ENCODE measurements at regions of chr1 and their contacts with region 1.

Region 1: DNA sequence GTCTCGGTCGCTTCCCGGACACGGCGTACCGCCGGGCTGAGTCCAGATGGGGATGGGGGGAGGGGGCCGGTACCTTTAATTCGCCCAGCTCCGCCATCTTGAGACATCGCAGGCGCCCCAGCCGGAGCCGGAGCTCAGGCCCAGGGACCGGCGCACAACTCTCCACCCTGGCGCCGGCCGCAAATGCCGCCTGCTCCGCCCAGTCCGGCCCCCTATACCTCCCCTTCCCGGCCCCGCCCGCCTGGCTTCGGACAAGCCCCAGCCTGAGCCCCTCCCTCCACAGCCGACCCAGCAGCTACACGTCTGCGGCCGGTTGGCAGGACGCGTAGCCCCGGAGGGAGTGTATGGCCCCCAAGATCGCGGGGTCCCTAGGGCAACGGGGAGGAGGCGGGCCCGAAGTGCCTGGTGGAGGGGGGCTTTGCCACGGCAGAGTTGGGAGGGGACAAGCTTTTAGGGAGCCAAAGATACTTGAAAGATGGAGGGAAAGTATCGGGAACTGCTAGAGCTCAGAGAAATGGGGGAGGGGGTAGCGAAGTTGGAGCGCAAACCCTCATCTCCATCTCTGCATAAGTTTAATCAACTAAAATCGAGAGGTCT is at the start of gene PIAS3:
- DNase-seq: peak; percentile 91
- ATAC-seq: peak; percentile 86
- H3K4me3 Mint-ChIP-seq: peak within 1 kb of the TSS; percentile 96
- H3K27ac Mint-ChIP-seq: peak within 1 kb of the TSS; percentile 92
- H3K4me1 Mint-ChIP-seq: peaks cover 14% of the 10 kb centered on the region
- H3K27me3 Mint-ChIP-seq: peaks cover 2% of the 10 kb centered on the region
- CTCF ChIP-seq: no peak
- total RNA-seq, gene PIAS3: 29.0 and 30.9 TPM in 2 replicates

Region 2: GRCh38 chr1:145690624-145691035 is 168.4 kb before region 1 on chr1:
- CTCF ChIA-PET with region 1: no interaction called
- POLR2A ChIA-PET with region 1: no interaction called
- intact Hi-C with region 1: no loop called
- DNase-seq: no peak
- ATAC-seq: no peak
- H3K4me3 Mint-ChIP-seq: no peak overlapping the region
- H3K27ac Mint-ChIP-seq: no peak overlapping the region
- H3K4me1 Mint-ChIP-seq: peaks cover 14% of the 10 kb centered on the region
- H3K27me3 Mint-ChIP-seq: no peaks in the 10 kb centered on the region
- CTCF ChIP-seq: no peak

Region 3: DNA sequence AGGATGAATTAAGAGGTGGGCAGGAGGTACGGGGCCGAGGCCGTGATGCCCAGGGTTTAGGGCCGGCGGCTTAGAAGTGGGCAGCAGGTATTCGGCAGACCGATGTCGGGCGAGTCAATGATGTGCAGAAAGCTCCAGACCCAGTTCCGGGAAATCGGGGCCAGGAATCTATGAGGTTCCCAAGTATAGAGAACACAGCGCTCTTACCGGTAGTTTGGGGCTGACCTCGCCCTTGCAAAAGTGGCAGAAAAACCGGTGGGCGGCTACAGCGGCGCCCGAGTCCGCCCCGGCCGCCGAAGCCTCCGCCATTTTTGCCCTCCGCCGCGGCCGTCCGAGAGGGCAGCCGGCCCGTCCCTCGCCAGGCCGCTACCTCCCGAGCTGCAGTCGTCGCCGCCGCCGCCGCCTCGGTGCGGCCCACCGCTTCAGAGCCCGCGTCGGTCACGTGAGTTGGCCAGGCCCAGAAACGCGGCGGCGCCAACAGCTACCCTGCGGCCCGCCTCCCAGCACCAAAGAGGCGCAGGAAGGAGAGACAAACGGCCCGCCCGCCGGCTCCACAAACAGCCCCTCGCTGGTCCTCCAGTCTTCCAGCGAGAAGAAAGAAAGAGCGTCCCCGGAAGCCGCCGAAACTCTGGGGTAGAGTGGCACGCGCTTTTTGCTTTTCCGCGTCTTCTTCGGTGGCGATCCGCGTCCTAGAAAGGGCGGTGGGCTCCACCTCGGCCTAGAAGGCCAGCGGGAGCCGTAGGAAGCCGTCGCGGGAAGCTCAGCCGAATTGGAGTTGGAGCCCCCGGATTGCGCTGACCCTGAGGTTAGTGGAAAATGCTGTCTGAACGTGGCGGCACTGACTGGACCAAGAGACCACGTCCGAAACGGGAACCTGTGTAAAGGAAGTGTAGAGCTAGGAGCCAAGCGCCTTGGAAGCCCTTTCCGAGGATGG is 35.2 kb before region 1 on chr1 and contains the starts of genes POLR3C and RNF115:
- CTCF ChIA-PET with region 1: no interaction called
- POLR2A ChIA-PET with region 1: interaction called, 48 read pairs
- intact Hi-C with region 1: loop called (anchors 1 kb)
- DNase-seq: peak; percentile 80
- ATAC-seq: peak; percentile 95
- H3K4me3 Mint-ChIP-seq: peak within 1 kb of the TSS; percentile 97
- H3K27ac Mint-ChIP-seq: peak within 1 kb of the TSS; percentile 94
- H3K4me1 Mint-ChIP-seq: peaks cover 25% of the 10 kb centered on the region
- H3K27me3 Mint-ChIP-seq: no peaks in the 10 kb centered on the region
- CTCF ChIP-seq: no peak
- total RNA-seq, gene POLR3C: 43.7 and 51.2 TPM in 2 replicates
- total RNA-seq, gene RNF115: 15.3 and 19.7 TPM in 2 replicates

Region 4: DNA sequence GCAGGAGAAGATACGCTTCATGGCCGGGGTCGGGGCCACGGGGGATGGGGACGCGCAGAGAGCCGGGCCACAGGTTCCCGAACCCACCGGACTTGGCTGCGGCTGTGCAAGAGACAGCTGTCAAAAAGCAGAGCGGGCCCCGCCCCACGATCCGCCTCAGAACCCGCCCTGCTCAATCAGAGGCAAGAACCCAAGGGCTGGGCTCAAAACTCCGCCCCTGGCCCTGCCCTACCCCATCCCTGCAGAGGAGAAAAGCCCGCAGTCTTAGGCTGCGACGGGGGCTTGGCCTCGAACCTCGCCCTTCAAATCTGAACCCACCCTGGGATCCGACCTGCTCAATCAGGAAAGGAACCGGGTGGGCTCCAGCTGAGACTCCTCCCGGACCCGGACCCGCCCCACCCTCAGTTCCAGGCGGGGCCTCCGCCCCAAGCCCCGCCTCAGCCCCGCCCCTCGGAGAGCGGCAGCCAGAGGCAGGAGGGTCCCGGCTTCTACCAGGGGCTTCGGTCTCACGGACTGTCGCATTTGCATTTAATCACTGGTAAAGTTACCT is 26.8 kb after region 1 on chr1 and contains the start of gene ANKRD35:
- CTCF ChIA-PET with region 1: no interaction called
- POLR2A ChIA-PET with region 1: interaction called, 41 read pairs
- intact Hi-C with region 1: loop called (anchors 1 kb)
- DNase-seq: peak; percentile 82
- ATAC-seq: peak; percentile 99
- H3K4me3 Mint-ChIP-seq: peak within 1 kb of the TSS; percentile 88
- H3K27ac Mint-ChIP-seq: no peak within 1 kb of the TSS
- H3K4me1 Mint-ChIP-seq: peaks cover 19% of the 10 kb centered on the region
- H3K27me3 Mint-ChIP-seq: peaks cover 19% of the 10 kb centered on the region
- CTCF ChIP-seq: no peak
- total RNA-seq, gene ANKRD35: not detected in 2 replicates

Region 5: DNA sequence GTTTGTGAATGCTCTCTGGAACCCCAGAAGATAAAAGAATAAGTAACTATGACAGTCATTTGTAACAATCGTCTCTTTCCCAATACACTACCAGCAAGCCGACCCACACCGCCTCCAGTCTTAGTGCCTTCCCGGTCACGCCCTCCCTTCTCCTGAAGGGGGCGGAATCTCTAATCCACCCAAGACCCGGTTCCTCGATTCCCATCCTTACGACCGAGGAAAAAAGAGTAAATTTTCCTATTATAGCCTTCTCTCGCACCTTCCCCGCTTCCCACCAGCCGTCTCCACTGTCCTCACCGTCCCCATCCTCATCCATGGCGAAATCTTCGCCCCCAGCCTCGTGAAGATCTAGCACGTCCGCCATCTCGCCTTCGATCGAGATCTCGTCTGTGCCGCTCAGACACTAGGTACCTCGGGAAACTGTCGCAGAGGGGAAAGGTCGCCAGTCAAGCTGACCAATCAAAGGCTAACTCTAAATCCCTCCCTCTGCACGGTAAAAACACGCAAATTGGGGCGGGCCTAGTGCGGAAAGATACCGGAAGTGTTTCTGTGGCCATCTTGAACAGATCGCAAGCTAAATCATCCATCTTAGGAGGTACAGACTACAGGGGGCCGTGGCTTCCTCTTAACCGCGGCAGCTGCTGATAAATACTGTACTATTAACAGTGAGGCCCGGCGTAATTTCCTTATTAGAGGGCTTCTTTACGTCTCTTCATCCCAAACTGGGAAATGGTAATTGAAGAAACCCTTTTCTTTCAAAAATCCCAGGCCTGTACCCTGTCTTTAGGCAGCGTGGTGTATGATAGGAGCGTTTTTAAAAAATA is 68.3 kb after region 1 on chr1 and contains the start of gene RBM8A:
- CTCF ChIA-PET with region 1: interaction called, 9 read pairs
- POLR2A ChIA-PET with region 1: interaction called, 71 read pairs
- intact Hi-C with region 1: loop called (anchors 1 kb)
- DNase-seq: peak; percentile 77
- ATAC-seq: peak; percentile 97
- H3K4me3 Mint-ChIP-seq: no peak within 1 kb of the TSS
- H3K27ac Mint-ChIP-seq: peak within 1 kb of the TSS; percentile 74
- H3K4me1 Mint-ChIP-seq: peaks cover 15% of the 10 kb centered on the region
- H3K27me3 Mint-ChIP-seq: no peaks in the 10 kb centered on the region
- CTCF ChIP-seq: no peak
- total RNA-seq, gene RBM8A: 178 and 201 TPM in 2 replicates

Region 6: GRCh38 chr1:145978854-145979759 is 120.1 kb after region 1 on chr1:
- CTCF ChIA-PET with region 1: interaction called, 5 read pairs
- POLR2A ChIA-PET with region 1: interaction called, 21 read pairs
- intact Hi-C with region 1: loop called (anchors 1 kb)
- DNase-seq: peak; percentile 55
- ATAC-seq: peak; percentile 81
- H3K4me3 Mint-ChIP-seq: no peak overlapping the region
- H3K27ac Mint-ChIP-seq: no peak overlapping the region
- H3K4me1 Mint-ChIP-seq: no peaks in the 10 kb centered on the region
- H3K27me3 Mint-ChIP-seq: no peaks in the 10 kb centered on the region
- CTCF ChIP-seq: no peak

Region 7: GRCh38 chr1:146036965-146037646 is 178.1 kb after region 1 on chr1:
- CTCF ChIA-PET with region 1: no interaction called
- POLR2A ChIA-PET with region 1: interaction called, 39 read pairs
- intact Hi-C with region 1: loop called (anchors 1 kb)
- DNase-seq: peak; percentile 61
- ATAC-seq: peak; percentile 56
- H3K4me3 Mint-ChIP-seq: peak overlapping the region; percentile 99
- H3K27ac Mint-ChIP-seq: peak overlapping the region; percentile 98
- H3K4me1 Mint-ChIP-seq: peaks cover 43% of the 10 kb centered on the region
- H3K27me3 Mint-ChIP-seq: peaks cover 2% of the 10 kb centered on the region
- CTCF ChIP-seq: no peak

Region 8: GRCh38 chr1:147189514-147189913 is 1330.5 kb after region 1 on chr1:
- CTCF ChIA-PET with region 1: no interaction called
- POLR2A ChIA-PET with region 1: no interaction called
- intact Hi-C with region 1: no loop called
- DNase-seq: no peak
- ATAC-seq: no peak
- H3K4me3 Mint-ChIP-seq: no peak overlapping the region
- H3K27ac Mint-ChIP-seq: no peak overlapping the region
- H3K4me1 Mint-ChIP-seq: no peaks in the 10 kb centered on the region
- H3K27me3 Mint-ChIP-seq: no peaks in the 10 kb centered on the region
- CTCF ChIP-seq: no peak